ENCODE measurements at regions of chr17 and their contacts with region 1.

Region 1: GRCh38 chr17:21126645-21127510 is at the start of gene DHRS7B:
- DNase-seq: peak; percentile 90 to 98 (median 97)
- ATAC-seq: peak; percentile 80
- H3K4me3 ChIP-seq: peak within 1 kb of the TSS; percentile 88 to 90
- H3K4me3 Mint-ChIP-seq: peak within 1 kb of the TSS; percentile 94
- H3K27ac ChIP-seq: peak within 1 kb of the TSS; percentile 87 to 94
- H3K27ac Mint-ChIP-seq: peak within 1 kb of the TSS; percentile 97
- H3K4me1 ChIP-seq: peaks cover 22% of the 10 kb centered on the region
- H3K4me1 Mint-ChIP-seq: peaks cover 38% of the 10 kb centered on the region
- H3K27me3 ChIP-seq: no peaks in the 10 kb centered on the region
- H3K27me3 Mint-ChIP-seq: no peaks in the 10 kb centered on the region
- CTCF ChIP-seq: no peak
- total RNA-seq, gene DHRS7B: 6.5 to 8.2 TPM

Region 2: DNA sequence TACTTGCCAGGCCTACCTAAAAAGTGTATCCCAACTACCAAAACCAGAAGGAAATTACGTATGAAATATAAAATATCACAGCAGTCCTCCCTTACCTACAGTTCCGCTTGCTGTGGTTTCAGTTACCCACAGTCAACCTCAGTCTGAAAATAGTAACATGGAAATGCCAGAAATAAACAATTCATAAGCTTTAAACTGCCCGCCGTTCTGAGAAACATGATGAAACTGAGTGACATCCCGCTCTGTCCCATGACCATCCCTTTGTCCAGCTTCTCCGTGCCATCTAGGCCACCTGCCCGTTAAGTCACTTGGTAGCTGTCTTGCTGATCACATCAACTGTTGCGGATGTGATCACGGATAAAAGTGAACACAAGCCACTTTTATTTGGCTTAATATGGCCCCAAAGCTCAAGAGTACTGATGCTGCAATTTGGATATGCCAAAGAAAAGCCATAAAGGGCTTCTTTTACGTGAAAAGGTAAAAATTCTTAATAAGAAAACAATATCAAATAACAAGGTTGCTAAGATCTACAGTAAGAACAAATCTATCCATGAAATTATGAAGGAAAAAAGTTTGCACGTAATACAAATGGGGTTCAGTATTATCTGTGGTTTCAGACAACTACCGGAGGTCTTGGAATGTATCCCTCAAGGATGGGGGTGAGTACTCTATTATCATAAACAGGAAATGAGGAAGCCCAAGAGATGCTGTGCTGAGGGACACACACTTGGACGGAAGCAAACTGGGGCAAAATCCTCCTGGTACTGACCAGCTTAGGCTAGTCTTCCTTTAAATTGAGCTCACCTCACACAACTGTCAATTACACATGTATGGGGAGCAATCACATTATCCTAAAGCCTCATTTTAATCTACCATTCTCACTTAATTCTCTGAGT is 92.3 kb before region 1 on chr17:
- CTCF ChIA-PET with region 1: no interaction called
- POLR2A ChIA-PET with region 1: no interaction called
- intact Hi-C with region 1: loop called in 1 of 2 experiments (anchors 2 kb)
- DNase-seq: peak in 4 of 9 experiments; percentile 33 to 79 (median 51)
- ATAC-seq: peak; percentile 72
- H3K4me3 ChIP-seq: peak overlapping the region; percentile 27 to 46
- H3K4me3 Mint-ChIP-seq: peak overlapping the region; percentile 77
- H3K27ac ChIP-seq: peak overlapping the region; percentile 43 to 77
- H3K27ac Mint-ChIP-seq: peak overlapping the region; percentile 93
- H3K4me1 ChIP-seq: peaks cover 79% of the 10 kb centered on the region
- H3K4me1 Mint-ChIP-seq: peaks cover 86% of the 10 kb centered on the region
- H3K27me3 ChIP-seq: no peaks in the 10 kb centered on the region
- H3K27me3 Mint-ChIP-seq: no peaks in the 10 kb centered on the region
- CTCF ChIP-seq: no peak

Region 3: GRCh38 chr17:21214015-21214776 is 87.3 kb after region 1 on chr17 and contains the start of gene TMEM11:
- CTCF ChIA-PET with region 1: interaction called, 4 read pairs
- POLR2A ChIA-PET with region 1: interaction called, 4 read pairs
- intact Hi-C with region 1: loop called (anchors 1 kb)
- DNase-seq: peak; percentile 89 to 97 (median 94)
- ATAC-seq: peak; percentile 92
- H3K4me3 ChIP-seq: peak within 1 kb of the TSS; percentile 87 to 100
- H3K4me3 Mint-ChIP-seq: peak within 1 kb of the TSS; percentile 94
- H3K27ac ChIP-seq: peak within 1 kb of the TSS; percentile 84 to 95
- H3K27ac Mint-ChIP-seq: peak within 1 kb of the TSS; percentile 93
- H3K4me1 ChIP-seq: peaks cover 38% of the 10 kb centered on the region
- H3K4me1 Mint-ChIP-seq: peaks cover 52% of the 10 kb centered on the region
- H3K27me3 ChIP-seq: no peaks in the 10 kb centered on the region
- H3K27me3 Mint-ChIP-seq: no peaks in the 10 kb centered on the region
- CTCF ChIP-seq: peak; percentile 26
- total RNA-seq, gene TMEM11: 23.4 to 26.2 TPM

Region 4: DNA sequence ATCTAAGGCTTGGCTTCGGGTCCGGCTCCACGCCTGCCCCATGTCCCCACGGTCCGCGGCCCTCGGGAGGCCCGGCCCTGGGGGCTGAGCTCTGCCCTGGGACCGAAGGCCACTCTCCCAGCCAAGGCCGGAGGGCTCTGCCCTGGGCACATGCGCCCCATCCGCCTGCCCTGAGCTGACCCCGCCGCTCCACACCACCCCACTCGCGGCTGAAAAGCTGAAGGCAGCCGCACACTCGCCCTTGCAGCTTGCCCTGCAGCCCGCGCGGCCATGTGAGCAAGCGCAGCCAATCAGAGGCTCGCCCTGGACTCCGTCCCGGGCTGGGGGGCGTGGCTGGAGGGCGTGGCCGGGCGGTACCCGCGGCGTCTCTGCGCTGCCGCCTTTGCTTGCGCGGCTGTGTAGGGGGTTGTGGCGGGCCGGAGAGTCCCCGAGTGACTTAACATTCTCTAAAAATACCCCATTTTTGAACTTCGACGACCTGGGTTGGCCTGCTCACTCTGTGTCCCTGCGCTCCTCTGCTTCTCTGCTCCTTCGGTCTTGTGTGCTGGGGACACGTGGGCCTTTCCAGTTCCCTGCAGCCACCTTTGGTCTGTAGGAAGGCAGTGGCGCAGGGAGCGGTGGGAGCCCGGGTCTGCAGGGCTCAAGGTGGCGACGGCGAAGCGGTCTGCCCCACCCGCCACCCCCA is 148.8 kb after region 1 on chr17:
- CTCF ChIA-PET with region 1: interaction called, 13 read pairs
- POLR2A ChIA-PET with region 1: interaction called, 5 read pairs
- intact Hi-C with region 1: loop called in 1 of 2 experiments (anchors 1 kb)
- DNase-seq: peak; percentile 83 to 98 (median 94)
- ATAC-seq: peak; percentile 84
- H3K4me3 ChIP-seq: peak overlapping the region; percentile 60 to 80
- H3K4me3 Mint-ChIP-seq: peak overlapping the region; percentile 87
- H3K27ac ChIP-seq: peak overlapping the region; percentile 57 to 75
- H3K27ac Mint-ChIP-seq: peak overlapping the region; percentile 90
- H3K4me1 ChIP-seq: peaks cover 37% of the 10 kb centered on the region
- H3K4me1 Mint-ChIP-seq: peaks cover 42% of the 10 kb centered on the region
- H3K27me3 ChIP-seq: no peaks in the 10 kb centered on the region
- H3K27me3 Mint-ChIP-seq: no peaks in the 10 kb centered on the region
- CTCF ChIP-seq: no peak

Region 5: GRCh38 chr17:21457051-21458026 is 330.5 kb after region 1 on chr17:
- CTCF ChIA-PET with region 1: no interaction called
- POLR2A ChIA-PET with region 1: no interaction called
- intact Hi-C with region 1: loop called (anchors 2 to 5 kb)
- DNase-seq: peak; percentile 81 to 97 (median 90)
- ATAC-seq: peak; percentile 91
- H3K4me3 ChIP-seq: no peak overlapping the region
- H3K4me3 Mint-ChIP-seq: peak overlapping the region; percentile 15
- H3K27ac ChIP-seq: no peak overlapping the region
- H3K27ac Mint-ChIP-seq: peak overlapping the region; percentile 86
- H3K4me1 ChIP-seq: peaks cover 20% of the 10 kb centered on the region
- H3K4me1 Mint-ChIP-seq: peaks cover 22% of the 10 kb centered on the region
- H3K27me3 ChIP-seq: no peaks in the 10 kb centered on the region
- H3K27me3 Mint-ChIP-seq: peaks cover 7% of the 10 kb centered on the region
- CTCF ChIP-seq: peak; percentile 86